SK-N-SH (cell line): ENCODE measurements at regions of chr5 and their contacts with region 1.

Region 1: GRCh38 chr5:137629646-137630045 is 106.2 kb downstream of the KLHL3 start:
- DNase-seq: peak; percentile 75
- H3K4me3 ChIP-seq: peak overlapping the region in 1 of 2 experiments; percentile 45; a peak in 1 of 4 replicates
- H3K27ac ChIP-seq: no peak overlapping the region
- H3K4me1 ChIP-seq: peaks cover 0 to 3% of the 10 kb centered on the region in 2 experiments; a peak in 1 of 4 replicates
- H3K27me3 ChIP-seq: no peaks in the 10 kb centered on the region
- CTCF ChIP-seq: peak; percentile 93
- EP300 ChIP-seq: no peak
- RAD21 ChIP-seq: peak; percentile 96

Region 2: GRCh38 chr5:137613554-137614265 is 15.9 kb before region 1 on chr5:
- CTCF ChIA-PET with region 1: interaction called, 61 read pairs
- POLR2A ChIA-PET with region 1: no interaction called
- DNase-seq: no peak
- H3K4me3 ChIP-seq: no peak overlapping the region
- H3K27ac ChIP-seq: no peak overlapping the region
- H3K4me1 ChIP-seq: peaks cover 6 to 14% of the 10 kb centered on the region in 2 experiments; a peak in 2 of 4 replicates
- H3K27me3 ChIP-seq: no peaks in the 10 kb centered on the region
- CTCF ChIP-seq: no peak
- EP300 ChIP-seq: no peak
- RAD21 ChIP-seq: no peak

Region 3: DNA sequence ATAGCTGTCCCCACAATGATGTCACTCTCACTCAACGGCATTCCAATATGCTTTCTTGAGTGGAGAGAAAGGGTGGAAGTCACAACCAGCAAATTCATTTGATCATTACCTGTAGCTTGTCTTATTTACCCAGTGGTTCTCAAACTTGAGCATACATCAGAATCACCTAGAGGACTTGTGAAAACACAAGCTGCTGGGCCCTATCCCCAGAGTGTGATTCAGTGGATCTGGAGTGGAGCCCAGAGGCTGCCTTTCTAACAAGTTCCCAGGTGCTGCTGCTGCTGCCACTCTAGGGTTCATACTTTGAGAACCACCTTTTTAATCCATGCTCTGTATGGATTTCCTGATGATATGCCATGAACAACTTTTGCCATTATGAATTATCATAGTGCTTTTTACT is 11.5 kb after region 1 on chr5:
- CTCF ChIA-PET with region 1: interaction called, 59 read pairs
- POLR2A ChIA-PET with region 1: no interaction called
- DNase-seq: no peak
- H3K4me3 ChIP-seq: no peak overlapping the region
- H3K27ac ChIP-seq: no peak overlapping the region
- H3K4me1 ChIP-seq: no peaks in the 10 kb centered on the region
- H3K27me3 ChIP-seq: no peaks in the 10 kb centered on the region
- CTCF ChIP-seq: no peak
- EP300 ChIP-seq: no peak
- RAD21 ChIP-seq: no peak

Region 4: GRCh38 chr5:137660349-137660817 is 30.7 kb after region 1 on chr5:
- CTCF ChIA-PET with region 1: interaction called, 143 read pairs
- POLR2A ChIA-PET with region 1: no interaction called
- DNase-seq: peak; percentile 64
- H3K4me3 ChIP-seq: no peak overlapping the region
- H3K27ac ChIP-seq: no peak overlapping the region
- H3K4me1 ChIP-seq: peaks cover 0 to 2% of the 10 kb centered on the region in 2 experiments; a peak in 1 of 4 replicates
- H3K27me3 ChIP-seq: no peaks in the 10 kb centered on the region
- CTCF ChIP-seq: peak; percentile 78
- EP300 ChIP-seq: no peak
- RAD21 ChIP-seq: peak; percentile 82

Region 5: GRCh38 chr5:137688210-137688840 is 58.7 kb after region 1 on chr5:
- CTCF ChIA-PET with region 1: interaction called, 12 read pairs
- POLR2A ChIA-PET with region 1: no interaction called
- DNase-seq: no peak
- H3K4me3 ChIP-seq: no peak overlapping the region
- H3K27ac ChIP-seq: no peak overlapping the region
- H3K4me1 ChIP-seq: no peaks in the 10 kb centered on the region; a peak in 1 of 4 replicates
- H3K27me3 ChIP-seq: no peaks in the 10 kb centered on the region
- CTCF ChIP-seq: no peak
- EP300 ChIP-seq: no peak
- RAD21 ChIP-seq: no peak

Region 6: GRCh38 chr5:137743031-137743640 is 113.5 kb after region 1 on chr5:
- CTCF ChIA-PET with region 1: interaction called, 407 read pairs
- POLR2A ChIA-PET with region 1: interaction called, 6 read pairs
- DNase-seq: peak; percentile 50
- H3K4me3 ChIP-seq: no peak overlapping the region
- H3K27ac ChIP-seq: no peak overlapping the region
- H3K4me1 ChIP-seq: no peaks in the 10 kb centered on the region
- H3K27me3 ChIP-seq: no peaks in the 10 kb centered on the region
- CTCF ChIP-seq: peak; percentile 74
- EP300 ChIP-seq: no peak
- RAD21 ChIP-seq: peak; percentile 80

Region 7: DNA sequence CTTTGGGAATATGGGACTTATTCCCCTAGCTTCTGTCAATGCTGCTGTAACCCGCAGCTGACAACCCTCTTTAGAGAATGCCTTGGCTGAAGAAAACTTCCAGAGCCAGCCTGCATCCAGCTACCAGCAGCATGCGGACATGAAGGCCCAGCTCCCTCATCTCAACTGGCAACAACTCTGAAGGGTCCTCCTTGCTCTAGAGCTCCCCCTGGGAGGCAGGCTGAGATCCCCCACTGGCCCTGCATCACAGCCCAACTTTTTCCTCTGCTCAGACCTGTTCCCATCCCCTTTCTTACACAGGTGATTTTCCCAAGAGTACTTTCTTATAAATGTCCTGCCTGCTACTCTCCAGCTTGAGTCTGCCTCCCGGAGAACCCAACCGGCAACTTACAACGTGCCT is 435.5 kb after region 1 on chr5:
- CTCF ChIA-PET with region 1: interaction called, 10 read pairs
- POLR2A ChIA-PET with region 1: no interaction called
- DNase-seq: no peak
- H3K4me3 ChIP-seq: no peak overlapping the region
- H3K27ac ChIP-seq: no peak overlapping the region
- H3K4me1 ChIP-seq: no peaks in the 10 kb centered on the region
- H3K27me3 ChIP-seq: no peaks in the 10 kb centered on the region
- CTCF ChIP-seq: peak; percentile 30
- EP300 ChIP-seq: no peak
- RAD21 ChIP-seq: no peak